ENCODE measurements at regions of chr3 and their contacts with region 1.

Region 1: GRCh38 chr3:52278510-52279069 is at the start of gene WDR82:
- DNase-seq: peak; percentile 97
- H3K4me3 Mint-ChIP-seq: peak within 1 kb of the TSS; percentile 92
- H3K27ac Mint-ChIP-seq: peak within 1 kb of the TSS; percentile 99
- H3K4me1 Mint-ChIP-seq: peaks cover 63% of the 10 kb centered on the region
- H3K27me3 Mint-ChIP-seq: no peaks in the 10 kb centered on the region
- total RNA-seq, gene WDR82: 140 to 143 TPM

Region 2: GRCh38 chr3:52220380-52221026 is 58.1 kb before region 1 on chr3:
- CTCF ChIA-PET with region 1: interaction called, 48 read pairs
- POLR2A ChIA-PET with region 1: interaction called, 3 read pairs
- DNase-seq: peak; percentile 91
- H3K4me3 Mint-ChIP-seq: peak overlapping the region; percentile 48
- H3K27ac Mint-ChIP-seq: peak overlapping the region; percentile 80
- H3K4me1 Mint-ChIP-seq: peaks cover 95% of the 10 kb centered on the region
- H3K27me3 Mint-ChIP-seq: no peaks in the 10 kb centered on the region

Region 3: DNA sequence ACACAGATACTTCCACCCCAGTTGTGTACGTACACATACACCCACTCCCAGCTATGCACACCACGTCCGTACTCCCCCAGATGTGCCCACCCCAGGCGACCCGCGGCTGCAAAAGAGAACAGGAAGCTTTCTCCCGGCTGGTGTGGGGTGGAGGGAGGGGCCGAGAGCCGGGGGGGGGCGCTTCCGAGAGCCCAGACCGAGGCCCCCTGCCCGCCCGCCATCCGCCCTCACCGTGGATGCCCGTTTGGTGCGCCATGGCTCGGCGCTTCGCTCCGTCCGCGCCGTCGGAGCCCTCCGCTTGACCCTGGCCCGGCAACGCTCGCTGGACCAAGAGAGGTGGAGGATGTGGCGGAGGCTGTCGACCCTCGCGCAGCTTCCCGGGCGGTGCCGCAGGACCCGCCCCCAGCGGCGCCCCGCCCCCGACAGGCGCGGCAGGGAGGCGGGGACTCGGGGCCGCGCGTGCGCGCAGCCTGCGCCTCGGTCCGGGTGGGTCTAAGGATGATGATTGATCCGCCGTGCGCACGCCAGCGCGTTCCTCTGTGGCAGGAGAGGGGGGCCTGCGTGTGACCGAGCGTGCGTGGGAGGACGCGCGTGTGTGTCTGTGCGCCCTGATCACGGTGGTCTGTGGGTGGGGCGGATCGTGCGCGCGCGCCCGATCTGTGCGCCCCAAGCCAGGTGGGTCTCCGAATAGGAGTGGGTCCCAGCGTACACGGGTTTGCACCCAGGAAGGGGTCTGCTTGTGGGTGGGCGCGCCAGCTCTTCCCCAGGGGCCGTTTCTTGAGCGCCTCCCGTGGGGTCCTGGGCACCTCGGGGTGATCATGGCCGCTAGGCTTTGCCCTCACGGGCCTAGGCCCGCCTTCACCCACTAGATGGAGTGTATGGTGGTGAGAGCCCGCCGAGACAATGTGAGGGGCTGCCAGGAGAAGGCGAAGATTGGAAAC is 39.6 kb before region 1 on chr3 and contains the start of gene TWF2:
- CTCF ChIA-PET with region 1: interaction called, 27 read pairs
- POLR2A ChIA-PET with region 1: interaction called, 5 read pairs
- DNase-seq: peak; percentile 84
- H3K4me3 Mint-ChIP-seq: peak within 1 kb of the TSS; percentile 86
- H3K27ac Mint-ChIP-seq: peak within 1 kb of the TSS; percentile 94
- H3K4me1 Mint-ChIP-seq: peaks cover 76% of the 10 kb centered on the region
- H3K27me3 Mint-ChIP-seq: no peaks in the 10 kb centered on the region
- total RNA-seq, gene TWF2: 117 to 119 TPM

Region 4: DNA sequence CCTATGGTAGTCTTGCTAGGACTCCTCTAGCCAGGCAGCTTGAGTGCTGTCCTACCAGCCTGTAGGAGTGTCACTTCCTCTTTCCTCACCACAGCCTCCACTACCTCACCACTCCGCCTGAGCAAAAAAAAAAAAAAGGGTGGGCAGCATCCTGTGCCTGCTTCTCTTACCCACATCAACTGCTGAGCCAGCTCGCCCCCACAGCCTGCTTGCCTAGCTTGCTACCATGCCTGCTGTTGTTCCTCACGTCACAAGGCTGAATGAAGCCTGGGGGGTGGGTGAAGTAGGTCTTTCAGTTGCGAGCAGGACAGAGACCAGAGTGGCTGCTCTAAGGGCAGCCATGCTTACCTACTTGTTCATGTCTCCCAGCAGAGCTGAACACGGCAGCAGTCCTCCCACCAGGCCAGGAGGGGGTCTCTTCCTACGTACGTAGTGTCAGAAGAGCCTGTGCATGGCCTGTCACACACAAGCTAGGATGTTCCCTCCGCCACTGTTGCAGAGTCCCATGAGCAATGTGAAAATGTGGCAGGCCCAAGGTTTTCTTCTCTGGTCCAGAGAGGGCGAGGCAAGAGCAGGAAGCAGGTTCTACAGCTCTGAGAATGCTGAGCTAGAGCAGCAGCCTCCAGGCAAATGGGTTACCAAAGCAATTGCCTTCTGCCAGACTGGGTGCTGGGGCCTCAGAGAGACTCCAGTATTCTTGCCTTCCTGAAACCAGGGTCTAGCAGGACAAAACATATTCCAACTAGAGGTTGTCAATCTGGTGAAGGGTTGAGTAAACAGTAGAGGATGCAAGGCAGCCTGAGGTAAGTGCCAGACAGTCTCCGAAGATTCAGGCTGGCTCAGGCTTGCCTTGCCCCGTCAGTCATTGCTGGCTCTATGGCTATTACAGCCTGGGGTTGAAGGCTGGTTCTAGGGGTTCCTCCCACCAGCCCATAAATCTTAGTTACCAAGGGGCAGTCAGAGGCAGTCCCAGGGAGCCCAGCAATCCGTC is 25.0 kb before region 1 on chr3:
- CTCF ChIA-PET with region 1: interaction called, 45 read pairs
- POLR2A ChIA-PET with region 1: interaction called, 15 read pairs
- DNase-seq: peak; percentile 91
- H3K4me3 Mint-ChIP-seq: peak overlapping the region; percentile 75
- H3K27ac Mint-ChIP-seq: peak overlapping the region; percentile 97
- H3K4me1 Mint-ChIP-seq: peaks cover 91% of the 10 kb centered on the region
- H3K27me3 Mint-ChIP-seq: no peaks in the 10 kb centered on the region

Region 5: DNA sequence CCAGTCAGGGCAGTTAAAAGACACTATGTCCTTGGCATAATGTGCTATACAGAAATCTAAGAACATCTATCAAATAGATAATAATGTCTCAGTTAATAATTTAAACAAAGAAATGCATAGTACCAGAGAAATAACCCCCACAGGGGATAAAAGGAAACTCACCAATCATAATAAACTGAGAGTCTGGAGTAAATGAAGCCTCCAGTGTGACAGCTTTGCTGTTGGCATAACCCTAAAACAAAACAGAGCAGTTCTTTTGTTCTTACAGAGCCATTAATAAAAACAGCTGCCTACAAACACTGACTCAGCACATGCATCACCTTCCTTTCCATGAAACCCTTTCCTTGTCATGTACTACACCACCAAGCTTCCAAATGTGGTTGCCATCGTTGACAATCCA is 19.6 kb before region 1 on chr3:
- CTCF ChIA-PET with region 1: interaction called, 45 read pairs
- POLR2A ChIA-PET with region 1: interaction called, 15 read pairs
- DNase-seq: no peak
- H3K4me3 Mint-ChIP-seq: no peak overlapping the region
- H3K27ac Mint-ChIP-seq: no peak overlapping the region
- H3K4me1 Mint-ChIP-seq: peaks cover 95% of the 10 kb centered on the region
- H3K27me3 Mint-ChIP-seq: no peaks in the 10 kb centered on the region

Region 6: GRCh38 chr3:52339612-52340011 is 61.0 kb after region 1 on chr3:
- CTCF ChIA-PET with region 1: interaction called, 10 read pairs
- POLR2A ChIA-PET with region 1: interaction called, 5 read pairs
- DNase-seq: peak; percentile 77
- H3K4me3 Mint-ChIP-seq: no peak overlapping the region
- H3K27ac Mint-ChIP-seq: no peak overlapping the region
- H3K4me1 Mint-ChIP-seq: peaks cover 13% of the 10 kb centered on the region
- H3K27me3 Mint-ChIP-seq: no peaks in the 10 kb centered on the region

Region 7: GRCh38 chr3:52407779-52408178 is 129.2 kb after region 1 on chr3:
- CTCF ChIA-PET with region 1: no interaction called
- POLR2A ChIA-PET with region 1: no interaction called
- DNase-seq: no peak
- H3K4me3 Mint-ChIP-seq: no peak overlapping the region
- H3K27ac Mint-ChIP-seq: no peak overlapping the region
- H3K4me1 Mint-ChIP-seq: peaks cover 38% of the 10 kb centered on the region
- H3K27me3 Mint-ChIP-seq: no peaks in the 10 kb centered on the region

Measured in activated CD4-positive, alpha-beta T cell treated with anti-CD3 and anti-CD28 coated beads, Interleukin-2, amount 10 ng/mL, durations not matched to agents 7 days and 5 days (primary cell).